ENCODE measurements at regions of chr4 and their contacts with region 1.

Region 1: GRCh38 chr4:40309250-40309774 is 25.8 kb upstream of the CHRNA9 start:
- DNase-seq: peak; percentile 84 to 97 (median 92)
- ATAC-seq: peak; percentile 55
- H3K4me3 ChIP-seq: peak overlapping the region; percentile 28 to 38
- H3K4me3 Mint-ChIP-seq: peak overlapping the region; percentile 74
- H3K27ac ChIP-seq: peak overlapping the region; percentile 71 to 96
- H3K27ac Mint-ChIP-seq: peak overlapping the region; percentile 99
- H3K4me1 ChIP-seq: peaks cover 78% of the 10 kb centered on the region
- H3K4me1 Mint-ChIP-seq: peaks cover 82% of the 10 kb centered on the region
- H3K27me3 ChIP-seq: no peaks in the 10 kb centered on the region
- H3K27me3 Mint-ChIP-seq: no peaks in the 10 kb centered on the region
- CTCF ChIP-seq: peak; percentile 86

Region 2: GRCh38 chr4:40193016-40193571 is 116.2 kb before region 1 on chr4:
- CTCF ChIA-PET with region 1: interaction called, 49 read pairs
- POLR2A ChIA-PET with region 1: interaction called, 26 read pairs
- intact Hi-C with region 1: loop called (anchors 1 to 2 kb)
- DNase-seq: peak in 6 of 9 experiments; percentile 49 to 82 (median 65)
- ATAC-seq: peak; percentile 14
- H3K4me3 ChIP-seq: peak overlapping the region; percentile 36 to 42
- H3K4me3 Mint-ChIP-seq: peak overlapping the region; percentile 100
- H3K27ac ChIP-seq: peak overlapping the region; percentile 60 to 96
- H3K27ac Mint-ChIP-seq: peak overlapping the region; percentile 100
- H3K4me1 ChIP-seq: peaks cover 52% of the 10 kb centered on the region
- H3K4me1 Mint-ChIP-seq: peaks cover 64% of the 10 kb centered on the region
- H3K27me3 ChIP-seq: no peaks in the 10 kb centered on the region
- H3K27me3 Mint-ChIP-seq: no peaks in the 10 kb centered on the region
- CTCF ChIP-seq: no peak

Region 3: GRCh38 chr4:40212674-40213527 is 96.4 kb before region 1 on chr4:
- CTCF ChIA-PET with region 1: interaction called, 59 read pairs
- POLR2A ChIA-PET with region 1: interaction called, 15 read pairs
- intact Hi-C with region 1: loop called in 1 of 2 experiments (anchors 5 kb)
- DNase-seq: peak in 1 of 9 experiments; percentile 59
- ATAC-seq: no peak
- H3K4me3 ChIP-seq: peak overlapping the region; percentile 5 to 31
- H3K4me3 Mint-ChIP-seq: peak overlapping the region; percentile 67
- H3K27ac ChIP-seq: peak overlapping the region; percentile 42 to 96
- H3K27ac Mint-ChIP-seq: peak overlapping the region; percentile 95
- H3K4me1 ChIP-seq: peaks cover 89% of the 10 kb centered on the region
- H3K4me1 Mint-ChIP-seq: peaks cover 93% of the 10 kb centered on the region
- H3K27me3 ChIP-seq: no peaks in the 10 kb centered on the region
- H3K27me3 Mint-ChIP-seq: no peaks in the 10 kb centered on the region
- CTCF ChIP-seq: no peak

Region 4: DNA sequence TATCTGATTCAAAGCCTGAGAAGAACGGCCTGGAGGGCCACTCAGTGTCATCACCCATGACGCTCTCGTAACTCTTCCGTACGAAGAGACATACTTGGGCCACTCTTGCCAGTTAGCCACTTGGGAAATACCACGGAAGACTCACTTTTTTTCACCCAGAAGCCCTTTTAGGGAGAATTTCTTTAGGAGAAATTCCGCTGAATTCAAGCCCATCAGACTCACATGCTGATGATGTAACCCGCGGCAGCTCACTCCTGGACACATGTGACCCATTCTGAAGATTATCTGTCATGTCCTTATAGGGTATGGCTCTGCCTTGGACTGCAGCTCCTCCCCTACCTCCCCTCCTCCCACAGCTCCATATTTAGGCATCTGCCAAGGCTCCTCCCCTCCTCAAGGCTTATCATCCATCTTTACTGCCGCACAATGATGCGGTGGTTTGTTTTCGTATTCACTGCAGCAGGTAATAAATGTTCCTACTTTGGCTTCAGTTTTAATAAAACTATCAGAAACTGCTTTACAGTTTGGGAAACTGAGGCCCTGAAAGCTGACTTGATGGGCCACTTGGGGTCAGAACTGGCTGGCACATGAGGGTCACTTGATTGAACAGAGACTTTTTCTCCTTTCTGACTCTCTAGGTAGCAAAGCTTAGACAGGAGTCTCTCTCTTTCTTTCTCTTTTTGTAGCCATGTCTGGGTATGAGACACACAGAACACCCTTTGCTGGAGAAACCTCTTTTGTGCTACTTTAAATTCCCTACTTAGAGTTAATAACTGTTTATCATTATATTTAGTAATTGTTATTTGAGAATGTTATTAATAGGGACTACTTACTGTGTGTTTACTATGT is 70.4 kb before region 1 on chr4:
- CTCF ChIA-PET with region 1: interaction called, 55 read pairs
- POLR2A ChIA-PET with region 1: interaction called, 11 read pairs
- intact Hi-C with region 1: no loop called
- DNase-seq: peak; percentile 63 to 96 (median 73)
- ATAC-seq: peak; percentile 90
- H3K4me3 ChIP-seq: peak overlapping the region; percentile 46 to 48
- H3K4me3 Mint-ChIP-seq: peak overlapping the region; percentile 82
- H3K27ac ChIP-seq: peak overlapping the region; percentile 68 to 98
- H3K27ac Mint-ChIP-seq: peak overlapping the region; percentile 95
- H3K4me1 ChIP-seq: peaks cover 95% of the 10 kb centered on the region
- H3K4me1 Mint-ChIP-seq: peaks cover 94% of the 10 kb centered on the region
- H3K27me3 ChIP-seq: no peaks in the 10 kb centered on the region
- H3K27me3 Mint-ChIP-seq: no peaks in the 10 kb centered on the region
- CTCF ChIP-seq: no peak

Region 5: GRCh38 chr4:40264995-40265909 is 44.1 kb before region 1 on chr4:
- CTCF ChIA-PET with region 1: interaction called, 5 read pairs
- POLR2A ChIA-PET with region 1: interaction called, 9 read pairs
- intact Hi-C with region 1: loop called (anchors 1 to 5 kb)
- DNase-seq: peak; percentile 34 to 89 (median 67)
- ATAC-seq: peak; percentile 81
- H3K4me3 ChIP-seq: peak overlapping the region; percentile 7 to 32
- H3K4me3 Mint-ChIP-seq: peak overlapping the region; percentile 74
- H3K27ac ChIP-seq: peak overlapping the region; percentile 41 to 77
- H3K27ac Mint-ChIP-seq: peak overlapping the region; percentile 98
- H3K4me1 ChIP-seq: peaks cover 67% of the 10 kb centered on the region
- H3K4me1 Mint-ChIP-seq: peaks cover 79% of the 10 kb centered on the region
- H3K27me3 ChIP-seq: no peaks in the 10 kb centered on the region
- H3K27me3 Mint-ChIP-seq: no peaks in the 10 kb centered on the region
- CTCF ChIP-seq: no peak

Region 6: GRCh38 chr4:40289366-40290188 is 19.7 kb before region 1 on chr4:
- CTCF ChIA-PET with region 1: interaction called, 32 read pairs
- POLR2A ChIA-PET with region 1: interaction called, 15 read pairs
- intact Hi-C with region 1: loop called (anchors 1 kb)
- DNase-seq: peak in 4 of 9 experiments; percentile 38 to 71 (median 48)
- ATAC-seq: peak; percentile 89
- H3K4me3 ChIP-seq: no peak overlapping the region
- H3K4me3 Mint-ChIP-seq: peak overlapping the region; percentile 61
- H3K27ac ChIP-seq: peak overlapping the region; percentile 19 to 59
- H3K27ac Mint-ChIP-seq: peak overlapping the region; percentile 97
- H3K4me1 ChIP-seq: peaks cover 45% of the 10 kb centered on the region
- H3K4me1 Mint-ChIP-seq: peaks cover 63% of the 10 kb centered on the region
- H3K27me3 ChIP-seq: no peaks in the 10 kb centered on the region
- H3K27me3 Mint-ChIP-seq: no peaks in the 10 kb centered on the region
- CTCF ChIP-seq: no peak